Ascending aorta (tissue), 2 donors: ENCODE measurements at regions of chr2 and their contacts with region 1.

Region 1: DNA sequence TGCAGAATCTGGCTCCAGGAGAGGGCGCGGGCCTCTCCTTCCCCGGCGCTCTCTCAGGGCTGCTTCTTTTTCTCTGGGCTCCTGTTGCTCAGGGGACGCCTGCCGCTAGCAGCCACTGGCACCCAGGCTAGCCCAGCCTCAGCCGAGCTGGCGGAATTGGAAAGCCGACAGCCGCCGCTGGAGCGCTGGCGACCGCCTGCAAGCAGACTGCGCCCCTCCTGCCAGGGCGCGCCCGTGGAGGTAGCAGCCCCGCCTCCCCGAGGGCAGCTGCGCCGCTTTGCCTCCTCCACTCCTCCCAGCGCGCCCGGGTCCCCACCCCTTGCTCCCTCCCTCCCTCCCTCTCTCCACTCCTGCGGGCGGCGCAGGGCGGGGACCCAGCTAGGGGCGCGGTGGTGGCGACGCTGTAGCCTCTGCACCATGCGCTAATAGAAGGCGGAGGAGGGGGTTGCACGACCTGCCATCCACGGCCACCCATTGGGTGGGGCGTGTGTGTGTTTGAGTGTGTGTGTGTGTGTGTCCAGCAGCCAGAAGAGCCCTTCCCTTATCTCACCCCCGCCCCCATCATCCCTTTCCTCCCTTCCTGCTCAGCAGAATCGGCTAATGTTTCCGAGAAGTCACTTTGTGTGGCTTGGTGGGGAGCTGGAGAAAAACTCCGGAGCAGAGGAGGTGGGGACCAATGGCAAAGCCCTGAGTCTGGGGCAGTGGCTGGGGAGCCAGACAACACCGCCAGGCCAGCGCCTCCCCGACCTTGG is at the start of gene SCN9A:
- DNase-seq: peak in 1 of 2 donors; percentile 77
- H3K4me3 ChIP-seq: peak within 1 kb of the TSS; percentile 65 to 70
- H3K27ac ChIP-seq: peak within 1 kb of the TSS; percentile 51 to 54
- H3K4me1 ChIP-seq: peaks cover 0 to 4% of the 10 kb centered on the region in 2 donors
- H3K27me3 ChIP-seq: no peaks in the 10 kb centered on the region
- CTCF ChIP-seq: no peak
- total RNA-seq, gene SCN9A: 5.5 TPM

Region 2: GRCh38 chr2:165953655-165954606 is 422.0 kb before region 1 on chr2 and contains the start of gene TTC21B:
- intact Hi-C with region 1: loop called (anchors 5 kb)
- DNase-seq: peak; percentile 76 to 97
- H3K4me3 ChIP-seq: peak within 1 kb of the TSS; percentile 77 to 95
- H3K27ac ChIP-seq: peak within 1 kb of the TSS; percentile 79 to 82
- H3K4me1 ChIP-seq: peaks cover 0 to 16% of the 10 kb centered on the region in 2 donors
- H3K27me3 ChIP-seq: no peaks in the 10 kb centered on the region
- CTCF ChIP-seq: peak; percentile 67 to 83 (median 78)
- total RNA-seq, gene TTC21B: 5.5 TPM

Region 3: DNA sequence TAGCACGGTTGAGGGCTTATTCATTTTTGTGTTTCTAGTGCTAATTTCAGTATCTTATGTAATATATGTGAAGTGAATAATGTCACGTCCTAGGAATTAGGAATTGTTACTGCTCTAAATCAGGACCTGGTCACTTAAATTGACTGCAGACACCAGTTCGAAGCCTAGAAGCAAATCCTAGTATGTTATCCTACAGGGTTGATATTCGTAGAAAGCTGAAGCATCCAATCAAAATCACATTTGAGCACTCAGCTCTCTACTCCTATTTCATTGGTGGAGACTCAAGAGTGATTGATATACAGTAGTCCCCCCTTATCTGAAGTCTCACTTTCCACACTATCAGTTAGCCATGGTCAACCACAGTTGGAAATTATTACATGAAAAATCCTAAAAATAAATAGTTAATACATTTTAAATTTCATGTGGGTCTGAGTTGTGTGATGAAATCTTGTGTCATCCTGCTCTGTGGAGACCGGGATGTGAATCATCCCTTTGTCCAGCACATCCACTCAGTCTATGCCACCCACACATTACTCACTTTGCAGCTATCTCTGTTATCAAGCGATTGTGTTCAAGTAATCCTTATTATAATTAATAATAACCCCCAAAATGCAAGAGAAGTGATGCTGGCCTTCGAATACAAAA is 35.0 kb after region 1 on chr2:
- intact Hi-C with region 1: no loop called
- DNase-seq: no peak
- H3K4me3 ChIP-seq: no peak overlapping the region
- H3K27ac ChIP-seq: no peak overlapping the region
- H3K4me1 ChIP-seq: no peaks in the 10 kb centered on the region
- H3K27me3 ChIP-seq: no peaks in the 10 kb centered on the region
- CTCF ChIP-seq: no peak

Region 4: DNA sequence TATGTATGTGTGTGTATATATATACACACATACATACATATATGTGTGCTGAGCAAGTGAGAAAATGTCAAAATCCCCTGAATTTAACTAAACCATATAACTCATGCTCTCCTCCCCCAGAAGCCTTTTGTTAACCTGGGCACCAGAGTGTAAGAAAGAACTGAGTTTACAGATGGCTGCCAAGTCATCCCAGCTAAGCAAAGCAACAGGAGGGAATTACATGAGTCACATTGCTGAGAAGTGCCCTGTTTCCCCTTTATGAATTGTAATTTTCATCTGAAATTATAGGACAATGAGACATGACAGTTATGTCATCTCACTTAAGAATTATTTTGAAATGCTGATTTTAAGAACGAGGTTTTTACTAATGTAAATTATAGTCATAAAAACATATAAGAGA is 88.3 kb after region 1 on chr2:
- intact Hi-C with region 1: no loop called
- DNase-seq: no peak
- H3K4me3 ChIP-seq: no peak overlapping the region
- H3K27ac ChIP-seq: no peak overlapping the region
- H3K4me1 ChIP-seq: no peaks in the 10 kb centered on the region
- H3K27me3 ChIP-seq: no peaks in the 10 kb centered on the region
- CTCF ChIP-seq: no peak

Region 5: GRCh38 chr2:166593403-166593802 is 217.5 kb after region 1 on chr2:
- intact Hi-C with region 1: no loop called
- DNase-seq: no peak
- H3K4me3 ChIP-seq: no peak overlapping the region
- H3K27ac ChIP-seq: no peak overlapping the region
- H3K4me1 ChIP-seq: no peaks in the 10 kb centered on the region
- H3K27me3 ChIP-seq: no peaks in the 10 kb centered on the region
- CTCF ChIP-seq: no peak